Activated T-helper 1 cell treated with anti-CD3 and anti-CD28 coated beads, Interleukin-12 subunit alpha, Interleukin-12 subunit beta, Interleukin-2, Interleukin-4 antibody, amounts not matched to agents 30 ng/mL and 10 ng/mL and 1 ng/mL, durations not matched to agents 14 hours and 24 hours and 36 hours (primary cell): ENCODE measurements at regions of chr12 and their contacts with region 1.

Region 1: GRCh38 chr12:28253161-28253641 is 62.9 kb downstream of the CCDC91 start:
- DNase-seq: peak; percentile 18
- H3K4me3 Mint-ChIP-seq: peak overlapping the region; percentile 74
- H3K27ac Mint-ChIP-seq: peak overlapping the region; percentile 97
- H3K4me1 Mint-ChIP-seq: peaks cover 48% of the 10 kb centered on the region
- H3K27me3 Mint-ChIP-seq: no peaks in the 10 kb centered on the region

Region 2: DNA sequence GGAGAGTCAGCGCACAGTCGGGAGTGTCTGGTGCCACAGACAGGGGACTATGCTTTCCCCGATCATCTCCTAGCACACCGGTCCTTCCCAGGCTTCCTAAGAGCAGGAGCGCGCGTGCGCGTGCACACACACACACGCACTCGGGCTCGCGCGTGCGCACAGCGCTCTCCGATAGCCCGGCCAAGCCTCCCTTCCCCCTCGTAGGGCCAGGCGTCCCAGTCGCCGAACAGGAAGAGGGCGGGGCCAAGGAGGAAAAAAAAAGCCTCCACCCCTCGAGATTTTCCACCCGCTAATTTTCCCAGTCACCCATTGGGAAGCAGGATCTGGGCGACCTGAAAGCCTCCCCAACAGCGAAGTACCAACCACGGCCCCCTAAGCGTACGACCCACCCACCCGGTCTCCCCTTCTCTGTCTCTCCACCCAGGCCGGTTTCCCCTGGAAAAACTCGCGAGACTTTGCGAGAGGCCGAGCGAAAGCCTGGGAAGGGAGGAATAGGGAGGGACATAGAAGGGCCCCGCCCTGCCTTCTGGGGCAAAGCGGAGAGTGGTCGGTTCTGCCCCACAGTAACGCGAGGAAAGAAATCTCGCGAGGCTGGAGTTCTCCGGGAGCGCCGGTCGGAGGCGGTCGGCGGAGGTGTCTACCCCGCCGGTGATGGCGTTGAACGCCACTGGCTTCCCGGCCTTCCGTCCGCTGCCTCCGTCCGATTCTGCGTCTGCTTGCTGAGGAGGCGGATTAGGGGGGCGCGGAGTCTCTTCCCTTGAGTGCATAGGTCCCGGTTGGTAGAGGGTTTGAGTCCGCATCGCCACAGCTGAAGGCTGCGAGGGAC is 1315.1 kb before region 1 on chr12 and contains the starts of genes FGFR1OP2 and INTS13:
- intact Hi-C with region 1: loop called (anchors 2 kb)
- DNase-seq: peak; percentile 97
- H3K4me3 Mint-ChIP-seq: peak within 1 kb of the TSS; percentile 96
- H3K27ac Mint-ChIP-seq: peak within 1 kb of the TSS; percentile 96
- H3K4me1 Mint-ChIP-seq: peaks cover 82% of the 10 kb centered on the region
- H3K27me3 Mint-ChIP-seq: no peaks in the 10 kb centered on the region
- total RNA-seq, gene FGFR1OP2: 48.3 and 49.9 TPM in 2 replicates
- total RNA-seq, gene INTS13: 43.8 and 52.2 TPM in 2 replicates

Region 3: DNA sequence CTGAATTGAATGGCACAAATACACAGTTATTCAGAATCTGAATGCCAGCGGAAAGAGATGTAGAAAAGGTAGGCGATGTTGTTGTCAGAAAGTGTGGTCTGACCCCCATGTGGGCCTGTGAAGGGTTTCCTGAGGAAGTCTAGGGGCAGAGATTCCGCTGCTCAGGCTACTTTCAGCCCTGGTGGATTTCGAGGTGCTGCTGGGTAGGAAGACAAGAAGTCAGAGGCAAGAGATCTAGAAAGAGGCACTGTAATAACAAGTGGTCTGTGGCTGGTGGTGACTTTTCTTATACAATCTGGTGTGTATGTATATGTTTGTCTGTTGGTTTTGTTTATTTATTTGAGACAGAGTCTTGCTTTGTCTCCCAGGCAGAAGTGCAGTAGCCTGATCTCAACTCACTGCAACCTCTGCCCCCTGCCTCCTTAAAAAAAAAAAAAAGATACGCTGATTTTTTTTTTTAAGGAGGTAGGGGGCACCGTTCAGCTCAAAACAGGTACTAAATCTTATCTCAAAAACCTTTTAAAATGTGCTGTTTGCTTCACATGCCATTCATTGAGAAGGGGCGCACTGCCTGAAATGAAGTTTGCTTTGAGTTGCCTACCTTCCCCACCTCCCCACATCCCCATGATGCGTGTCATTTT is 446.0 kb before region 1 on chr12:
- intact Hi-C with region 1: loop called (anchors 1 kb)
- DNase-seq: no peak
- H3K4me3 Mint-ChIP-seq: no peak overlapping the region
- H3K27ac Mint-ChIP-seq: peak overlapping the region; percentile 53
- H3K4me1 Mint-ChIP-seq: peaks cover 36% of the 10 kb centered on the region
- H3K27me3 Mint-ChIP-seq: peaks cover 11% of the 10 kb centered on the region

Region 4: DNA sequence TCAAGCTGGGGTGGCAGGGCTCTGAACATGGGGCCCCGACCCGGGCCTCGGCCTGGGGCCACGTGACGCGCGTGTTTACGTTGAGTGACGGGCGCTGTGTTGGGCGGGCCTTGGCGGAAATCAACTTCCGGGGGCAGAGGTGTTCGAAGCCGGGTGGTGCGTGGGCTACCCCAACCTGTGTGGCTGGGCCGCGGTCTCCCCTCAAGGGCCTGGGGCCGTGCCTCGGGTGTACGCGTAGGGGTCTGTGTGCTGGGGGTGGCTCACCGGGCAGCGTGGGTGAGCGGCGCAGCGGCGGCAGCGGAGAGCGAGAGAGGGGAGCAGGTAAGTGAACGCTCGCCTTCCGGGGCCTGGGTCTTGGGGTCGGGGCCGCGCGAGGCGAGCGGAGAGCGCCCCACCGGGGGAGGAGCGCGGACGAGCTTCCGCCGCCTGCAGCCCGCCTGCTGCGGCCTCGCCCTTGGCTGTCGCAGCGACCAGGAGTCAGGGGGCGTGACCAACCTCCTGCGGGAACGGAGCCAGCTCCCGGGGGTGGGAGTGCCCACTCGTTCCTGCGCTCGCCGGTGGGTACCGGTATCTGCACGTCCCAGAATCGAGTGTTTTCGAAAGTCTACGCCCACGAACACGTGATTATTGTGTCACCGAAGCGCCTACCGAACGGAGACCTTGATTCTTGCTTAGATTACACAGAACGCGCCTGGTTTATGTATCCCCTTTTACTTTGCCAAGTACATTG is 62.7 kb before region 1 on chr12 and contains the start of gene CCDC91:
- intact Hi-C with region 1: loop called (anchors 1 kb)
- DNase-seq: peak; percentile 79
- H3K4me3 Mint-ChIP-seq: peak within 1 kb of the TSS; percentile 91
- H3K27ac Mint-ChIP-seq: peak within 1 kb of the TSS; percentile 96
- H3K4me1 Mint-ChIP-seq: peaks cover 39% of the 10 kb centered on the region
- H3K27me3 Mint-ChIP-seq: no peaks in the 10 kb centered on the region
- total RNA-seq, gene CCDC91: 12.9 and 15.0 TPM in 2 replicates

Region 5: DNA sequence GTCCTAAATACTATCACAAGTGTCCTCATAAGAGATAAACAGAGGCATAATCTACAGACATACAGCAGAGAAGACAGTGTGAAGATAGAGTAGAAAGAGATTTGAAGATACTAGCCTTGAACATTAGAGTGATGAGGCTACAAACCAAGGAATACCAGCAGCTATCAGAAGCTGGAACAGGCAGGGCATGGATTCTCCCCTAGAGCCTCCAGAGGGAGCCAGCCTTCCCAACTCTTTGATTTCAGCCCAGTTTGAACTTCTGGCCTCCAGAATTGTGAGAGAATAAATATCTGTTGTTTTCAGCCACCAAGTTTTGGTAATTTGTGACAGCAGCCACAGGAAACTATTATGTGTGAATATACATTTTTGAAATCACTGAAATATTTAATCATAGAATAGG is 15.8 kb before region 1 on chr12:
- intact Hi-C with region 1: no loop called
- DNase-seq: no peak
- H3K4me3 Mint-ChIP-seq: no peak overlapping the region
- H3K27ac Mint-ChIP-seq: no peak overlapping the region
- H3K4me1 Mint-ChIP-seq: peaks cover 7% of the 10 kb centered on the region
- H3K27me3 Mint-ChIP-seq: no peaks in the 10 kb centered on the region

Region 6: GRCh38 chr12:28497889-28498411 is 244.7 kb after region 1 on chr12:
- intact Hi-C with region 1: loop called (anchors 1 kb)
- DNase-seq: no peak
- H3K4me3 Mint-ChIP-seq: no peak overlapping the region
- H3K27ac Mint-ChIP-seq: no peak overlapping the region
- H3K4me1 Mint-ChIP-seq: peaks cover 12% of the 10 kb centered on the region
- H3K27me3 Mint-ChIP-seq: no peaks in the 10 kb centered on the region

Region 7: DNA sequence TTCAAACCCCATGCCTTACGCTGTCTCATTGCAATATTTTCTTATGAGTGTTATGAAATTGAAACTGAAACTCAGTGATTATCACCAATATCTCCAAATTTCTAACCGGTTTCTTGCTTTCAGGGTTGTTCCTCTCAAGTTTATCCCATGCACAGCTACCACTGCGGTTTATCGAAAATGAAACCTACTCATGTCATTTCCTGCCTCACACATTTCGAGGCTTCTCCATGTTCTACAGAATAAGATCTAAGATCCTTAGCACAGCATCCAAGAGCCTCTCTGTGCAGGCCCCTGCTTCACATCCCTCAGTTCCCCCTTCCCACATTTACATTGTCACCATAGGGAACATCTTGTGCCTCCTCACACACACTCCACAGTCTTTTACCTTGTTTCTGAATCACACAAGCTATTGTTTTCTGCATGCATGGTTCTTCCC is 850.4 kb after region 1 on chr12:
- intact Hi-C with region 1: loop called (anchors 1 kb)
- DNase-seq: peak; percentile 58
- H3K4me3 Mint-ChIP-seq: peak overlapping the region; percentile 34
- H3K27ac Mint-ChIP-seq: peak overlapping the region; percentile 75
- H3K4me1 Mint-ChIP-seq: peaks cover 31% of the 10 kb centered on the region
- H3K27me3 Mint-ChIP-seq: peaks cover 10% of the 10 kb centered on the region